CD14-positive monocyte (primary cell): ENCODE measurements at regions of chr11 and their contacts with region 1.

Region 1: GRCh38 chr11:36289226-36289852 is at the start of gene COMMD9:
- DNase-seq: peak; percentile 93 to 96 (median 94)
- H3K4me3 ChIP-seq: peak within 1 kb of the TSS; percentile 73 to 95 (median 92)
- H3K4me3 Mint-ChIP-seq: peak within 1 kb of the TSS; percentile 93 to 97
- H3K27ac ChIP-seq: peak within 1 kb of the TSS; percentile 68 to 92
- H3K27ac Mint-ChIP-seq: peak within 1 kb of the TSS; percentile 94 to 97 (median 94)
- H3K4me1 ChIP-seq: peaks cover 21 to 25% of the 10 kb centered on the region in 2 donors
- H3K4me1 Mint-ChIP-seq: peaks cover 44% of the 10 kb centered on the region
- H3K27me3 ChIP-seq: no peaks in the 10 kb centered on the region
- H3K27me3 Mint-ChIP-seq: peaks cover 0 to 1% (median 0%) of the 10 kb centered on the region in 3 donors
- CTCF ChIP-seq: no peak
- polyA plus RNA-seq, gene COMMD9: 105 to 238 (median 235) TPM

Region 2: GRCh38 chr11:35662649-35663407 is 626.5 kb before region 1 on chr11 and contains the start of gene TRIM44:
- intact Hi-C with region 1: loop called in 1 of 2 experiments (anchors 2 kb)
- DNase-seq: peak; percentile 85 to 93 (median 92)
- H3K4me3 ChIP-seq: peak within 1 kb of the TSS; percentile 79 to 95 (median 92)
- H3K4me3 Mint-ChIP-seq: peak within 1 kb of the TSS; percentile 91 to 98
- H3K27ac ChIP-seq: peak within 1 kb of the TSS; percentile 95 to 96
- H3K27ac Mint-ChIP-seq: peak within 1 kb of the TSS; percentile 92 to 99 (median 99)
- H3K4me1 ChIP-seq: peaks cover 20 to 23% of the 10 kb centered on the region in 2 donors
- H3K4me1 Mint-ChIP-seq: peaks cover 30% of the 10 kb centered on the region
- H3K27me3 ChIP-seq: peaks cover 10 to 20% of the 10 kb centered on the region in 2 donors
- H3K27me3 Mint-ChIP-seq: peaks cover 10 to 34% (median 31%) of the 10 kb centered on the region in 3 donors
- CTCF ChIP-seq: no peak
- polyA plus RNA-seq, gene TRIM44: 25.3 to 47.1 (median 45.9) TPM

Region 3: GRCh38 chr11:36333897-36334296 is 44.6 kb after region 1 on chr11:
- intact Hi-C with region 1: no loop called
- DNase-seq: peak in 2 of 3 donors; percentile 4 to 10
- H3K4me3 ChIP-seq: no peak overlapping the region
- H3K4me3 Mint-ChIP-seq: no peak overlapping the region
- H3K27ac ChIP-seq: no peak overlapping the region
- H3K27ac Mint-ChIP-seq: no peak overlapping the region
- H3K4me1 ChIP-seq: no peaks in the 10 kb centered on the region
- H3K4me1 Mint-ChIP-seq: peaks cover 3% of the 10 kb centered on the region
- H3K27me3 ChIP-seq: no peaks in the 10 kb centered on the region
- H3K27me3 Mint-ChIP-seq: peaks cover 0 to 8% (median 0%) of the 10 kb centered on the region in 3 donors
- CTCF ChIP-seq: no peak

Region 4: GRCh38 chr11:36361901-36362391 is 72.6 kb after region 1 on chr11:
- intact Hi-C with region 1: loop called in 1 of 2 experiments (anchors 10 kb)
- DNase-seq: peak; percentile 41 to 83 (median 71)
- H3K4me3 ChIP-seq: peak overlapping the region in 1 of 3 experiments; percentile 32
- H3K4me3 Mint-ChIP-seq: peak overlapping the region; percentile 38 to 77
- H3K27ac ChIP-seq: no peak overlapping the region
- H3K27ac Mint-ChIP-seq: peak overlapping the region in 4 of 7 donors; percentile 60 to 77 (median 68)
- H3K4me1 ChIP-seq: peaks cover 51 to 68% of the 10 kb centered on the region in 2 donors
- H3K4me1 Mint-ChIP-seq: peaks cover 60% of the 10 kb centered on the region
- H3K27me3 ChIP-seq: no peaks in the 10 kb centered on the region
- H3K27me3 Mint-ChIP-seq: peaks cover 2 to 12% (median 3%) of the 10 kb centered on the region in 3 donors
- CTCF ChIP-seq: no peak

Region 5: DNA sequence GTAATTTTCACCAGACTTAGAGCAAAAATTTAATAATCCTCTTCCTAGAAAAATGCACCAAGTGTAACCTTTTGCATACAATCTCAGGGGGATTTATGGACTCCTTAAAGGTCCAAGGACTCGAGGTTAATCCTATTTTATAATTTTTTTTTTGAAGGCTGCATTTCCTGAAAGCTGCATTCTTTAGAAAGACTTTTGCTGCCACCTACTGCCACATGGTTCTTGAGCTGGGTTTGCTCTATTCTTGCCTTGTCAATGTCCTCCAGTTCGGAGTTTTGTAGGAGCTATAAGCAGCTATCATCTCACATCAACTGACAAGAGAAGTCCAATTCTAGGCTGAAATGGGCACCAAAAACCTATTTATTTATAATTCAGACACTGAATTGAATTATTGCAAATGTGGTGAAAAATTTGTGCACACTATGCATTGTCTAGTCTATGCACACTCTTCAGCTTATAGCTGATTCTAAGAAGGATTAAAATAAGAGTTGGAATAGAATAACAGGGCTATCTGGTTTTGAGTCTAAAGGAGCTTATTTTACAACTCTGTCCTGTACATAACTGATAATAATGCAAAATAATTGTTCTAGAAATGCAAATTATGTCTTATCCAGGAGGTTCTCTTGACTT is 189.5 kb after region 1 on chr11:
- intact Hi-C with region 1: loop called (anchors 2 to 5 kb)
- DNase-seq: peak; percentile 39 to 62 (median 53)
- H3K4me3 ChIP-seq: no peak overlapping the region
- H3K4me3 Mint-ChIP-seq: no peak overlapping the region
- H3K27ac ChIP-seq: no peak overlapping the region
- H3K27ac Mint-ChIP-seq: no peak overlapping the region
- H3K4me1 ChIP-seq: no peaks in the 10 kb centered on the region
- H3K4me1 Mint-ChIP-seq: no peaks in the 10 kb centered on the region
- H3K27me3 ChIP-seq: no peaks in the 10 kb centered on the region
- H3K27me3 Mint-ChIP-seq: peaks cover 0 to 2% (median 0%) of the 10 kb centered on the region in 3 donors
- CTCF ChIP-seq: peak; percentile 77

Region 6: GRCh38 chr11:36492724-36493304 is 203.5 kb after region 1 on chr11:
- intact Hi-C with region 1: loop called (anchors 5 kb)
- DNase-seq: peak; percentile 41 to 57 (median 50)
- H3K4me3 ChIP-seq: no peak overlapping the region
- H3K4me3 Mint-ChIP-seq: no peak overlapping the region
- H3K27ac ChIP-seq: peak overlapping the region in 1 of 2 donors; percentile 18
- H3K27ac Mint-ChIP-seq: peak overlapping the region in 2 of 7 donors; percentile 40 to 53
- H3K4me1 ChIP-seq: peaks cover 5 to 7% of the 10 kb centered on the region in 2 donors
- H3K4me1 Mint-ChIP-seq: peaks cover 11% of the 10 kb centered on the region
- H3K27me3 ChIP-seq: no peaks in the 10 kb centered on the region
- H3K27me3 Mint-ChIP-seq: no peaks in the 10 kb centered on the region
- CTCF ChIP-seq: peak; percentile 82

Region 7: DNA sequence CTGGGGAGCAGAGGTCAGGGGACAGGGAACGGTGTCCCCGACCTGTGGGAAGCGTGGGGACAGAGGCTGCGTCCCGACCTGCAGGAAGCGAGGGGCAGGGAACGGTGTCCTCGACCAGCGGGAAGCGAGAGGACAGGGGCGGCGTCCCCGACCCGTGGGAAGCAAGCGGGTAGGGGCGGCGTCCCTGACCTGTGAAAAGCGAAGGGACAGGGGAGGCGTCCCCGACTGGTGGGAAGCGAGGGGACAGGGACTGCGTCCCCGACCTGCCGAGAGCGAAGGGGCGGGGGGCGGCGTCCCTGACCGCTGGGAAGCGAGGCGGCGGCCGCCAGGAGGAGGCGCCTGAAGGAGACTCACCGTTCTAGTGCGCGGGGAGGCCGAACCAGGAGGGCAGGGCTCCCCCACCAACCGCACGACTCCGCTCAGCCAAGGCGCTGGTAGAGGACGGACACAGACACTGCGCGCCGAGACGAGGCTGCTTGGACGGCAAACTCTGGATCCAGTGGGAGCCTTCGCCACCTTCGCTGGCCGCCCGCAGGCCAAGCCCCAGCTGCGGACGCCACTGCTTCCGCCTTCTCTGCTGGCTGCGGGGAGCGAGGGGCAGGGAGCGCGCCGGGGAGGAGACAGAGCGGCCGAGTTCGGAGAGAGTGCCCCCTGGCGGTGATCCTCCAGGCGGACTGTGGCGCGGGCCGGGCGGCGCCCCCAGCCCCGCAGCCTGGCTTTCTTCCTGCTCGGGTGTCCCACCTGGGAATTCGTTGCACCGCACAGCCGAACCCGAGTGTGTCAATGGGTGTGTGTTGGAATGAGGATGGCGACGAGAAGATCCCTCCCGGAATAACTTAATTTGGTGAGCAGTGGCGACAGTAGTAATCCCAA is 220.6 kb after region 1 on chr11 and contains the start of gene TRAF6:
- intact Hi-C with region 1: loop called in 1 of 2 experiments (anchors 5 kb)
- DNase-seq: peak; percentile 85 to 87 (median 86)
- H3K4me3 ChIP-seq: peak within 1 kb of the TSS; percentile 59 to 94 (median 60)
- H3K4me3 Mint-ChIP-seq: peak within 1 kb of the TSS; percentile 97 to 98
- H3K27ac ChIP-seq: peak within 1 kb of the TSS; percentile 60 to 93
- H3K27ac Mint-ChIP-seq: peak within 1 kb of the TSS; percentile 88 to 98 (median 95)
- H3K4me1 ChIP-seq: peaks cover 20 to 23% of the 10 kb centered on the region in 2 donors
- H3K4me1 Mint-ChIP-seq: peaks cover 24% of the 10 kb centered on the region
- H3K27me3 ChIP-seq: no peaks in the 10 kb centered on the region
- H3K27me3 Mint-ChIP-seq: peaks cover 0 to under 1% (median 0%) of the 10 kb centered on the region in 3 donors
- CTCF ChIP-seq: peak; percentile 98
- polyA plus RNA-seq, gene TRAF6: 5.5 to 7.3 (median 6.7) TPM